ENCODE measurements at regions of chr6 and their contacts with region 1.

Region 1: DNA sequence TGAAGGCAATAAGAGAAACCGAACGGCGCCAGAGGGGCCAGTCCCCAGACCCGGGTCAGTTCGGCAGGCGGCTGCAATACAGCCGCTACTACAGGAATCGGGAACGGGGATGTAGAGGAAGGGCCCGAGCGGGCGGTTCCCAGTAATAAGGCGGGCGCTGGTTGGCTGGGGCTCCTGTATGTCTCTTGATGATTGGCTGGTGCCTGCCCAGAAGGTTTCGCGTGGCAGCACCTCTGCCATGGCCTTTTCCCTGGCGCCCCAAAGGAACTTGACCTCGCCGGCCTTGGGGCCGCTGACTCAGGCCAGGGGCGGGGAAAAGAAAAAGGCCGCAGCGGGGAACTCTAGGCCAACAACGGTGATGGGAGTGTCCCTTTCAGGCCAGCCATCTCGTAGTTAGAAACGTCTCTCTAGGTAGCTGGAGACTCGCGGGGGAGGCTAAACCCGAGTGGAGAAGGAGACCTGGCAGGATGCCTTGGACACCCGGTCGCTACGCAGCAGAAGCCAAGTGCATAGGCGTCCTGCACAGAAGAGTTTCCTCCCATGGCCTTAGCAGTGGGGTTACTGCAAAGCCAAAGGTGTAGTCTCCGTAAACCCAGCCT is at the start of gene IBTK:
- DNase-seq: peak; percentile 91
- H3K4me3 Mint-ChIP-seq: peak within 1 kb of the TSS; percentile 92
- H3K27ac Mint-ChIP-seq: peak within 1 kb of the TSS; percentile 90
- H3K4me1 Mint-ChIP-seq: peaks cover 32% of the 10 kb centered on the region
- H3K27me3 Mint-ChIP-seq: no peaks in the 10 kb centered on the region
- total RNA-seq, gene IBTK: 25.3 to 25.9 TPM

Region 2: DNA sequence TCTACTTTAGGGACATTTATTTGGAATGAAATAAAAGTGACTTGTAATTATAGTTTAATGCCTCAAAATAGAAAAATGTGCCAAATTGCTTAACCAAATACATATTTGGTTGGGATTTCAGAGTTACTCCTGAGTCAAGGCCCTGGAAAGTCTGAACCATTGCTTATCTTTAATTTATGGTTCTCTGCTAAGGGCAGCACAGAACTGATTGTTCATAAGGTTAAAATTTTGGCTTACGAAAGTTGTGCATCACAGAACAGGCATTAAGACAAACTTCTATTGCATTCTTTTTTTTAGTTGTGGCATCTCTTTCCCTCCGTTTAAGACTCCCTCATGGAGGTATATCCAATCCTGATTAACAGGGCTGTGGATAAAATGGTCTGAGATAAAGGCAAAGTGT is 403.0 kb before region 1 on chr6:
- CTCF ChIA-PET with region 1: no interaction called
- intact Hi-C with region 1: no loop called
- DNase-seq: no peak
- H3K4me3 Mint-ChIP-seq: no peak overlapping the region
- H3K27ac Mint-ChIP-seq: no peak overlapping the region
- H3K4me1 Mint-ChIP-seq: no peaks in the 10 kb centered on the region
- H3K27me3 Mint-ChIP-seq: no peaks in the 10 kb centered on the region

Region 3: DNA sequence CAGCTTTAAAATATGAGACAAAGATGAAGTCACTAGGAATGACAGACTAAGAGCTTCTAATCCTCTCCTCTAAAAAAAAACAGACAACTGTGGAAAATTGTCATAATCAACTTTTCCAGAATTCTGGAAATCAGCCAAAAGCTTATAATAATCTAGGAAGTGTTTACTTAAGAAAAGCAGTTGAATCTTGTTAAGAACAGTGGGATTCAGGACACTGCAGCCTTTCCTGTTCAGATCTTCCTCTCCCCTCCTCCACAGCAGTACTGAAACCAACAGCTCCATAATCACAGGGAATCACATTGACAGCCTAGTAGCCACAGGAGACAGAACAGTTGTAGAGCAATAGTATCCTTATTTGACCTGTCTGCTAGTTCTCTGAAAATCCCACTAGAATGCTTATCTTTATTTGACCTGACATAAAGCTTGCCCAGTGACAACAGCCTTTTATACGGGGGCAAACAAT is 41.8 kb before region 1 on chr6:
- CTCF ChIA-PET with region 1: no interaction called
- intact Hi-C with region 1: no loop called
- DNase-seq: no peak
- H3K4me3 Mint-ChIP-seq: no peak overlapping the region
- H3K27ac Mint-ChIP-seq: no peak overlapping the region
- H3K4me1 Mint-ChIP-seq: no peaks in the 10 kb centered on the region
- H3K27me3 Mint-ChIP-seq: no peaks in the 10 kb centered on the region

Region 4: GRCh38 chr6:82589509-82590206 is 341.9 kb after region 1 on chr6:
- CTCF ChIA-PET with region 1: no interaction called
- intact Hi-C with region 1: loop called (anchors 5 kb)
- DNase-seq: no peak
- H3K4me3 Mint-ChIP-seq: no peak overlapping the region
- H3K27ac Mint-ChIP-seq: no peak overlapping the region
- H3K4me1 Mint-ChIP-seq: no peaks in the 10 kb centered on the region
- H3K27me3 Mint-ChIP-seq: no peaks in the 10 kb centered on the region

Region 5: GRCh38 chr6:83057705-83058321 is 810.1 kb after region 1 on chr6:
- CTCF ChIA-PET with region 1: no interaction called
- intact Hi-C with region 1: loop called (anchors 1 kb)
- DNase-seq: peak; percentile 45
- H3K4me3 Mint-ChIP-seq: no peak overlapping the region
- H3K27ac Mint-ChIP-seq: no peak overlapping the region
- H3K4me1 Mint-ChIP-seq: peaks cover 9% of the 10 kb centered on the region
- H3K27me3 Mint-ChIP-seq: no peaks in the 10 kb centered on the region

Region 6: DNA sequence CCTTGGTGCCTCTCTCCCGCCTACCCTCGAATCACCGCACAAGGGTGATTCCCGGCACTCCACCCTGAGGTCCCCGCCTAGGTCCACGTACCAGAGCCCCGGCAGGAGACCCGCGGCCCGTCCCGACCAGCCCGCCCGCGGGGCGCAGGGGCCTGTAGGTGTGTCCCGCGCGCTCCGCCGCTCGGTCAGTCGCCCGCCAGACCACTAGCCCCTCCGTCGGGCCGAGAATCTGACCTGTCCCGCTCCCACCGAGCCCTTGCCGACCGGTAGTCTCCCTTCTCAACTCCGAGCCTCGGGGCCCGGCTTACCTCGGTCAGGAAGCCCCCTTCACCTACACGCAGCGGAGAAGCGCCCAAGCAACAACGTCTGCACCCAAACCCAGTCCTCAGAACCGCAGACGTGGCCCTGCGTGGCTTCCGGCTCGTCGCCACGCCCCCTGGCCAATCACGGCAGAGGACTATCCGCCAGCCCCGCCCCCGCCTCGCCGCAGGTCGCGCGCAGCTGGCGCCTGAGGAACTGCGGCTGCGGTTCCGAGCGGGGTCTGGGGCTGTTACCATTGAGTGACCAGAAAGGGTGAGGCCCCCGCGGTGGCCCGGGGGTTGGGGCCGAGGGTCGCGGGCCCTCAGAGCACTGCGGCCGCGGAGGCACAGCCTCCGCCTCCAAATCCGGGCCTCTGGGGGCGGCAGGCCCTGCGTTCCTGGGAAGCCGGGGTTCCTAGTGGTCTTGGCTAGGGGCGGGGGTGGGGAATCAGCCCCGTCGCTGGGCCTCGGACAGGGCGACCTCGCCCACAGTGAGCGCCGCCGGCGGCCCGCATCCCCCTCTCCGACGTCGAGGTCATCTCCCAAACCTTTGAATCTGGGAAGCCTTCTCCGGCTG is 945.4 kb after region 1 on chr6 and contains the starts of genes PGM3 and RWDD2A:
- CTCF ChIA-PET with region 1: no interaction called
- intact Hi-C with region 1: loop called (anchors 1 kb)
- DNase-seq: peak; percentile 91
- H3K4me3 Mint-ChIP-seq: peak within 1 kb of the TSS; percentile 96
- H3K27ac Mint-ChIP-seq: peak within 1 kb of the TSS; percentile 89
- H3K4me1 Mint-ChIP-seq: peaks cover 38% of the 10 kb centered on the region
- H3K27me3 Mint-ChIP-seq: peaks cover 2% of the 10 kb centered on the region
- total RNA-seq, gene PGM3: 17.0 to 19.8 TPM
- total RNA-seq, gene RWDD2A: 1.4 TPM